HepG2 (cell line): ENCODE measurements at regions of chr4 and their contacts with region 1.

Region 1: GRCh38 chr4:70356185-70356584 is 4.4 kb upstream of the SMR3A start:
- DNase-seq: no peak
- ATAC-seq: no peak
- H3K4me3 ChIP-seq: no peak overlapping the region
- H3K27ac ChIP-seq: no peak overlapping the region
- H3K4me1 ChIP-seq: no peaks in the 10 kb centered on the region
- H3K27me3 ChIP-seq: 0 out of 5 replicates have a peak, but pooled peaks cover 0 to 3% of the 10 kb centered on the region in 2 experiments
- CTCF ChIP-seq: no peak
- EP300 ChIP-seq: no peak
- POLR2A ChIP-seq: no peak
- RAD21 ChIP-seq: no peak

Region 2: GRCh38 chr4:68963374-68963773 is 1392.8 kb before region 1 on chr4:
- CTCF ChIA-PET with region 1: no interaction called
- POLR2A ChIA-PET with region 1: no interaction called
- in situ Hi-C with region 1: no loop called
- intact Hi-C with region 1: loop called (anchors 10 kb)
- DNase-seq: no peak
- ATAC-seq: no peak
- H3K4me3 ChIP-seq: no peak overlapping the region
- H3K27ac ChIP-seq: no peak overlapping the region
- H3K4me1 ChIP-seq: peaks cover 34% of the 10 kb centered on the region
- H3K27me3 ChIP-seq: no peaks in the 10 kb centered on the region
- CTCF ChIP-seq: no peak
- EP300 ChIP-seq: no peak
- POLR2A ChIP-seq: no peak
- RAD21 ChIP-seq: no peak